Gastrocnemius medialis (tissue), 4 donors: ENCODE measurements at regions of chr11 and their contacts with region 1.

Region 1: GRCh38 chr11:72222907-72223614 is 1.5 kb upstream of the INPPL1 start:
- DNase-seq: peak; percentile 94 to 96
- ATAC-seq: peak; percentile 78 to 80
- H3K4me3 ChIP-seq: peak overlapping the region; percentile 84 to 95 (median 88)
- H3K27ac ChIP-seq: peak overlapping the region; percentile 97 to 99 (median 98)
- H3K4me1 ChIP-seq: peaks cover 21 to 26% of the 10 kb centered on the region in 2 donors
- H3K27me3 ChIP-seq: no peaks in the 10 kb centered on the region
- CTCF ChIP-seq: peak in 4 of 5 experiments; percentile 3 to 63 (median 44)
- POLR2A ChIP-seq: peak; percentile 92 to 95

Region 2: DNA sequence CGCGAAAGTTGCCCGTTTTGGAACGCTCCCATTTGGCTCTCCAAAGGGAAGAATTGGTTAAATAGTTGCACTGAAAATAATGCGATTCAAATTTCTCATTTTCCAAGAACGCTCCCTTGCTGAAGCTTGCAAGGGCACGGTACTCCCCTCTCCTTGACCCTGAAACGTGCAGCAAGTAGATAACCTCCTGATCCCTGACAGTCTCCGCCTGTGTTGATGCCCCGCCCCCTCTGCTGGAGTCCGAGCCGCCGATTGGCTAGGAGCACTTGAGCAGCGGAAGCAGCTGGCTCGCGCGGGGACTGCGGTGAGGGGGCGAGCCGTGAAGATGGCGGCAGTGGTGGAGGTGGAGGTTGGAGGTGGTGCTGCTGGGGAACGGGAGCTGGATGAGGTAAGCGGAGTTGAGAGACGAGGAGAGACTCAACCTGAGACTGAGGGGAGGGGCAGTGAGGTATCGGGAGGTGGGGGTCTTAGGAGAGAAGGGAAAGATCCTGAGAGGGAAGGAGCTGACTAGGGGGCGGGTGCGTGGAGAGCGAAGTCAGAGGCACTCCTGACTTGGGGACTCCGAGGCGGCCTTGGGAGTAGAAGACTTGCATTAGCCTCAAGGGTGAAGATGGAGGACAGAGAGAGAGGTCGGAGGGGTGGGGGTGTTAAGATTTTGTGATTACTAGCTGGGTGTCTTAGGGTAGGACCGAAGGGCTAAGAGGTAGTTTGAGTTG is 294.2 kb before region 1 on chr11 and contains the start of gene RNF121:
- in situ Hi-C with region 1: no loop called
- intact Hi-C with region 1: loop called (anchors 1 kb)
- DNase-seq: peak; percentile 97
- ATAC-seq: peak; percentile 97
- H3K4me3 ChIP-seq: peak within 1 kb of the TSS; percentile 82 to 98 (median 90)
- H3K27ac ChIP-seq: peak within 1 kb of the TSS; percentile 84 to 93 (median 90)
- H3K4me1 ChIP-seq: peaks cover 47 to 50% of the 10 kb centered on the region in 2 donors
- H3K27me3 ChIP-seq: no peaks in the 10 kb centered on the region
- CTCF ChIP-seq: no peak
- POLR2A ChIP-seq: peak; percentile 65 to 79
- total RNA-seq, gene RNF121: 25.0 to 35.5 (median 26.7) TPM

Region 3: DNA sequence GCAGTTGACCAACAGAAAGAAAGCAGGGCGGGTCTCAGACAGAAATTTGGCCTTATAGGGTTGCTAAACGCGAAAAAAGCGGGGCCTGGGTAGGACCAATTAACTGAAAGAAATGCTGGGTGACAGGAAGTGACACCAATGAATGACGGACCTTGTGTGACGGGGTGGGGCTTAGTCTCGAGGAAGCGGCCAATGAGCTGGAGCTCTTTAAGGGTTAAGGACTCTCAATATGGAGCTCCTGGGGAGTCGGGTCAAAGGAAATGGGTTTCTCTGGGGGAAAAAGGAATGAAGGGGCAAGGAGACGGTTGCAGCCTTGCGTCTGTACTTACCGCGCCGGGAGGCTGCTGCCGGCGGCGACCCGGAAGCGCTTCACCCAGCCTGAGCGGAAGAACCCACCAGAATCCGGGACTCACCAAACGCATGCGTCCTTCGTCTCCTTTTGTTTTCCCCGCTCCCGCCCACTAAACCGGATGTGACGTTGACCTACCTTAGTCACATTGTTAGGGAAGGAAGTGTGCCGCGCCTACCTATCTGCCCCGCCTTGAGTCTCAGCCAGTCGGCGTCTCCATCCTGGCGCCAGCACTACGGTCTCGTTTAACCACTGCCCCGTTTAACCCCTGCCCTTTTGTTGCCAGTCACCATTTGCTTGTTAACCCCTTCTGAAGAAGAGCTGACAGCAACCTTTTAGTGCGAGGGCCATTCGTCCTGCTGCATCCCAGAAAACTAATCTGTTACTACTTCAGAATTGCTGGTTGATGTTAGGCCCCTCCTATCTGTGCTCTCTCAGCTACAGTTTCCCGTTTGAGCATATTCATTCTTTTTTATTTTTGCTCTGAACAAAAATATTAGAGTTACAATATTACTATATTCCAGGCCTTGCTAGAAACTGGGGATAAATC is 110.5 kb before region 1 on chr11 and contains the start of gene ANAPC15:
- in situ Hi-C with region 1: no loop called
- intact Hi-C with region 1: loop called (anchors 1 kb)
- DNase-seq: peak; percentile 98 to 99
- ATAC-seq: peak; percentile 94 to 95
- H3K4me3 ChIP-seq: peak within 1 kb of the TSS; percentile 59 to 68 (median 66)
- H3K27ac ChIP-seq: peak within 1 kb of the TSS; percentile 95 to 99 (median 98)
- H3K4me1 ChIP-seq: peaks cover 11 to 13% of the 10 kb centered on the region in 2 donors
- H3K27me3 ChIP-seq: no peaks in the 10 kb centered on the region
- CTCF ChIP-seq: no peak
- POLR2A ChIP-seq: peak; percentile 77 to 84
- total RNA-seq, gene ANAPC15: 21.2 to 39.3 (median 32.4) TPM

Region 4: DNA sequence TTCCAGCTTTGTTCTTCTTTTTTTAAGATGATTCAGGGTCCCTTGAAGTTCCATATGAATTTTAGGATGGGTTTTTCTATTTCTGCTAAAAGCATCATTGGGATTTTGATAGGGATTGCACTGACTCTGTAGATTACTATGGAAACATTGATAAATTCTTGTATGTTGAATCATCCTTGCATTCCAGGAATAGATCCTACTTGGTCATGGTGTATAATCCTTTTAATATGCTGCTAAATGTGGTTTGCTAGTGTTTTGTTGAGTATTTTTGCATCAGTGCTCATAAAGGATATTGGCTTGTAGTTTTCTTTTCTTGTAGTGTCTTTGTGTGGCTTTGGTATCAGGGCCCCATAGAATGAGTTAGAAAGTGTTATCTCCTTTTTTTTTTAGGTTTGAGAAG is 55.9 kb after region 1 on chr11:
- in situ Hi-C with region 1: no loop called
- intact Hi-C with region 1: no loop called
- DNase-seq: no peak
- ATAC-seq: no peak
- H3K4me3 ChIP-seq: no peak overlapping the region
- H3K27ac ChIP-seq: no peak overlapping the region
- H3K4me1 ChIP-seq: no peaks in the 10 kb centered on the region
- H3K27me3 ChIP-seq: peaks cover 0 to 6% (median 0%) of the 10 kb centered on the region in 3 donors
- CTCF ChIP-seq: no peak
- POLR2A ChIP-seq: no peak

Region 5: GRCh38 chr11:72430741-72431570 is 207.9 kb after region 1 on chr11:
- in situ Hi-C with region 1: no loop called
- intact Hi-C with region 1: loop called (anchors 5 kb)
- DNase-seq: no peak
- ATAC-seq: no peak
- H3K4me3 ChIP-seq: no peak overlapping the region
- H3K27ac ChIP-seq: no peak overlapping the region
- H3K4me1 ChIP-seq: peaks cover 16 to 31% of the 10 kb centered on the region in 2 donors
- H3K27me3 ChIP-seq: no peaks in the 10 kb centered on the region
- CTCF ChIP-seq: peak; percentile 53 to 76 (median 65)
- POLR2A ChIP-seq: no peak